B cell (primary cell): ENCODE measurements at regions of chr1 and their contacts with region 1.

Region 1: GRCh38 chr1:1307908-1308755 is at the starts of genes ACAP3 and PUSL1:
- DNase-seq: peak; percentile 95
- ATAC-seq: peak; percentile 62
- H3K4me3 ChIP-seq: peak within 1 kb of the TSS; percentile 31 to 92 (median 82)
- H3K4me3 Mint-ChIP-seq: peak within 1 kb of the TSS; percentile 90
- H3K27ac ChIP-seq: peak within 1 kb of the TSS; percentile 84 to 89
- H3K27ac Mint-ChIP-seq: peak within 1 kb of the TSS; percentile 95
- H3K4me1 ChIP-seq: peaks cover 34 to 47% of the 10 kb centered on the region in 2 donors
- H3K4me1 Mint-ChIP-seq: peaks cover 33% of the 10 kb centered on the region
- H3K27me3 ChIP-seq: no peaks in the 10 kb centered on the region
- H3K27me3 Mint-ChIP-seq: no peaks in the 10 kb centered on the region
- CTCF ChIP-seq: no peak
- total RNA-seq, gene ACAP3: 40.7 and 49.1 TPM in 2 replicates
- total RNA-seq, gene PUSL1: 15.7 and 17.9 TPM in 2 replicates

Region 2: GRCh38 chr1:923131-923990 is 384.8 kb before region 1 on chr1 and contains the start of gene SAMD11:
- CTCF ChIA-PET with region 1: no interaction called
- POLR2A ChIA-PET with region 1: no interaction called
- intact Hi-C with region 1: no loop called
- DNase-seq: peak; percentile 77
- ATAC-seq: peak; percentile 34
- H3K4me3 ChIP-seq: peak within 1 kb of the TSS in 4 of 5 experiments; percentile 4 to 58 (median 40)
- H3K4me3 Mint-ChIP-seq: peak within 1 kb of the TSS; percentile 91
- H3K27ac ChIP-seq: no peak within 1 kb of the TSS
- H3K27ac Mint-ChIP-seq: peak within 1 kb of the TSS; percentile 53
- H3K4me1 ChIP-seq: peaks cover 35 to 49% of the 10 kb centered on the region in 2 donors
- H3K4me1 Mint-ChIP-seq: peaks cover 24% of the 10 kb centered on the region
- H3K27me3 ChIP-seq: peaks cover 0 to 80% (median 41%) of the 10 kb centered on the region in 4 experiments
- H3K27me3 Mint-ChIP-seq: peaks cover 47% of the 10 kb centered on the region
- CTCF ChIP-seq: no peak
- total RNA-seq, gene SAMD11: not detected in 2 replicates

Region 3: DNA sequence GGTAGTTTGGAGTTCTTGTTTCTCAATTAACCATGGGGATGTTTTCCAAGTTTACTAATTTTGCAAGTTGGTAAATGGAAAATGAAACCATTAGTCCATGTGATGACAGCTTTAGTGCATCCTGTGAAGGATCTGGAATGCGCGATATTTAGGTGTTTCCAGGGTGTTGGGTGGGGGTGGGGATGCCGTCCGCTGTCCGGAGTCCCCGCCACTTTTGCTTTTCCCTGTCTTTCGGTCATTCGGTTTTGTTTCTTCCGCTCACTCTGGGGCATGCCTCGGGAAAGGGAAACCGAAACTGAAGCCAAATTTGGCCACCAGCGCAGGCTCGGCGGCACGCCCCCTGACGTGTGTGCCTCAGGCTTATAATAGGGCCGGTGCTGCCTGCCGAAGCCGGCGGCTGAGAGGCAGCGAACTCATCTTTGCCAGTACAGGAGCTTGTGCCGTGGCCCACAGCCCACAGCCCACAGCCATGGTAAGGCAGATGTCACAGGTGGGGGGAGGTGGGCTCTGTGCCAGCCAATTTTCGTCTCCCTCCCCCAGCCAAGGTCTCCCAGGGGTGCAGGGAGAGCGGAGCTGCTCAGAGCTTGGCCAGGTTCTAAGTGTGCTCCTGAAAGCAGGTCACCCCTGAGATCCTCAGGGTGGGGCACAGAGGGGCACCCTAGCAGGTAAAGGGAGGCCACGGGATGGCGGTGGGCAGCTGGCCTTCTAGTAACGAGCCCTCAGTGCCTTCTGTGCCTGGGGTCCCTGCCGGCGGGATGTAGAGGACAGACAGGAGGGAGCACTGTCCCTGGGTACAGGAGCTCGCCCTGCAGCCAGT is 294.8 kb before region 1 on chr1 and contains the start of gene ISG15:
- CTCF ChIA-PET with region 1: interaction called, 3 read pairs
- POLR2A ChIA-PET with region 1: no interaction called
- intact Hi-C with region 1: loop called (anchors 5 kb)
- DNase-seq: peak; percentile 91
- ATAC-seq: peak; percentile 96
- H3K4me3 ChIP-seq: peak within 1 kb of the TSS; percentile 68 to 94 (median 75)
- H3K4me3 Mint-ChIP-seq: peak within 1 kb of the TSS; percentile 95
- H3K27ac ChIP-seq: peak within 1 kb of the TSS; percentile 88 to 93
- H3K27ac Mint-ChIP-seq: peak within 1 kb of the TSS; percentile 98
- H3K4me1 ChIP-seq: peaks cover 16 to 23% of the 10 kb centered on the region in 2 donors
- H3K4me1 Mint-ChIP-seq: peaks cover 27% of the 10 kb centered on the region
- H3K27me3 ChIP-seq: no peaks in the 10 kb centered on the region
- H3K27me3 Mint-ChIP-seq: peaks cover 6% of the 10 kb centered on the region
- CTCF ChIP-seq: no peak
- total RNA-seq, gene ISG15: 25.2 and 28.3 TPM in 2 replicates

Region 4: DNA sequence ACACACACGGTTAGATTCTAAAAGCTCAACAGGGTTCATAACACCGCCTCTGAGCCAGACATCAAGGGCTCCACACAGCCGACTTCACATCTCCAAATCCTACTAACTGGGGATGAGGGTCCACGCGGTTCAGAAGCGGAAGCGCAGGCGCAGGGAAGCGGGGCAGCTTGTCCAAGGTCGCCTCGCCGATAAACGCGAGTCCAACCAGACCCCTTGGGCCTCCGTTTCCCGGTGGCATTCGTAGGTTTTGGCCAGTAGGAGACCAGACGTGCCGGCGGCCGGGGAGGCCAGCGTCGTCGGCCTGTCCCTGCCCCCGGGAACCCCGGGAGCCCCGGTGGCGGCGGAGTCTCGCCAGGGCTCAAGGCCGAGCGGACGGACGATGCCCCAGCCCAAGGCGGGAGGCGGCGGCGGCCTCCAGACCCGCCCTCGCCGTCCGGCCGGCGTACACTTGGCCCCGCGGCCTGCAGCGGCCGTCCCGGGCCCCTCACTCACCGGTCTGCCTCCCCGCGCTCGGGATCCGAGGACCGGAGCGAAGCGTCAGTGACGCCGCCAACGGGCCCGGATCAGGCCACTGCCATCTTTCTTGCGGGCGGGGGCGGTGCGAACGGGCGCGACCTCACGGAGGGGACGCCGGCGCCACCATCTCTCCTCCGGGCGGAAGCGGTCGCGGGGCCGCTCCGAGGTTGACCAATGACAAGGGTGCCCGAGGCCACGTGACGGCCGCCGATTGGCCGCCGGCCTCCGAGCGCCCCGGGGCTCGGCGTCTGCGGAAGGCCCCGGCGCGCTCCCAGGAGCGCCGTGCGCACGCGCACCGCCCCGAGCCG is 76.5 kb before region 1 on chr1 and contains the start of gene SDF4:
- CTCF ChIA-PET with region 1: no interaction called
- POLR2A ChIA-PET with region 1: no interaction called
- intact Hi-C with region 1: loop called (anchors 5 kb)
- DNase-seq: peak; percentile 98
- ATAC-seq: peak; percentile 94
- H3K4me3 ChIP-seq: peak within 1 kb of the TSS; percentile 86 to 98 (median 90)
- H3K4me3 Mint-ChIP-seq: peak within 1 kb of the TSS; percentile 93
- H3K27ac ChIP-seq: peak within 1 kb of the TSS; percentile 29 to 91
- H3K27ac Mint-ChIP-seq: peak within 1 kb of the TSS; percentile 84
- H3K4me1 ChIP-seq: peaks cover 25 to 30% of the 10 kb centered on the region in 2 donors
- H3K4me1 Mint-ChIP-seq: peaks cover 33% of the 10 kb centered on the region
- H3K27me3 ChIP-seq: no peaks in the 10 kb centered on the region
- H3K27me3 Mint-ChIP-seq: no peaks in the 10 kb centered on the region
- CTCF ChIP-seq: no peak
- total RNA-seq, gene SDF4: 143 and 151 TPM in 2 replicates

Region 5: DNA sequence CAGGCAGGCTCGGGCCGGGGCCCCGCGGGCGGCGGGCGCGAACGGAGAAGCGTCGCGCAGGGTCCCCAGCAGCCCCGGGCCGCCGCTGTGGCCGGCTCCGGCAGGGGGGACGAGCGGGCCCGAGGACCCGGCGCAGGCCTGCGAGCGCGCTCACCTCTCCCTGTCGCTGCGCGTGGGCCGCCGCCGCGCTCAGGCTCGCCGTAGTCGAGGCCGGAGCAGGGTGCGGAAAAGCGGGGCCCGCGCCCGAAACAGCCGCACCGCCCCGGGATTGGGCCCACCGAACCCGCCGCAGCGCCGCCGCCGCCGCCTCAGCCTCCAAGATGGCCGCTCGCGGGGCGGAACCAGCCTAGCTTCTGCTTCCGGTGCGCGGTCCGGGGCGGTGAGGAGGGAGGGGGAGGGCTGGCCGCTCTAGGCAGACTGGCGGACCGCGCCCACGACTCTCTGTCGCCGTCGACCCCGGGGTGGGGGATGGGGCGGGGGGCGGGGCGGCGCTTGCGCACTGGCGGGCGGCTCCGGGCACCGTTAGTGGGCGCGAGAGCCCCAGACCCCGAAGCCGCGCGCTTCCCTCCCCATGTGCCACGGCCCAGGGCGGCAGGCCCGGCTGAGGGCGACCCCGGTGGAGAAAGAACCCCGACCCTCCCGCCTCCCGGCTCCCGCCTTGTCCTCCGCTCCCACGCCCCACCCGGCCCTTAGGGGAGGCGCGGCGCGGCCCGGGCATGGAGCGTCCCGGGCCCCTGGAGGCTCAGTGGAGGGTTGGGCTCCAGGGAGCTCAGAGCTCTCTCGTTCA is 34.4 kb before region 1 on chr1 and contains the start of gene UBE2J2:
- CTCF ChIA-PET with region 1: no interaction called
- POLR2A ChIA-PET with region 1: no interaction called
- intact Hi-C with region 1: loop called (anchors 1 kb)
- DNase-seq: peak; percentile 94
- ATAC-seq: peak; percentile 98
- H3K4me3 ChIP-seq: peak within 1 kb of the TSS; percentile 3 to 84 (median 77)
- H3K4me3 Mint-ChIP-seq: peak within 1 kb of the TSS; percentile 88
- H3K27ac ChIP-seq: peak within 1 kb of the TSS; percentile 24 to 77
- H3K27ac Mint-ChIP-seq: peak within 1 kb of the TSS; percentile 76
- H3K4me1 ChIP-seq: peaks cover 29 to 38% of the 10 kb centered on the region in 2 donors
- H3K4me1 Mint-ChIP-seq: peaks cover 36% of the 10 kb centered on the region
- H3K27me3 ChIP-seq: no peaks in the 10 kb centered on the region
- H3K27me3 Mint-ChIP-seq: no peaks in the 10 kb centered on the region
- CTCF ChIP-seq: no peak
- total RNA-seq, gene UBE2J2: 115 and 120 TPM in 2 replicates

Region 6: GRCh38 chr1:1291548-1292441 is 16.3 kb before region 1 on chr1:
- CTCF ChIA-PET with region 1: interaction called, 16 read pairs
- POLR2A ChIA-PET with region 1: no interaction called
- intact Hi-C with region 1: no loop called
- DNase-seq: peak; percentile 87
- ATAC-seq: peak; percentile 84
- H3K4me3 ChIP-seq: no peak overlapping the region
- H3K4me3 Mint-ChIP-seq: no peak overlapping the region
- H3K27ac ChIP-seq: no peak overlapping the region
- H3K27ac Mint-ChIP-seq: peak overlapping the region; percentile 50
- H3K4me1 ChIP-seq: peaks cover 0 to 16% of the 10 kb centered on the region in 2 donors
- H3K4me1 Mint-ChIP-seq: peaks cover 11% of the 10 kb centered on the region
- H3K27me3 ChIP-seq: no peaks in the 10 kb centered on the region
- H3K27me3 Mint-ChIP-seq: no peaks in the 10 kb centered on the region
- CTCF ChIP-seq: peak; percentile 74

Region 7: DNA sequence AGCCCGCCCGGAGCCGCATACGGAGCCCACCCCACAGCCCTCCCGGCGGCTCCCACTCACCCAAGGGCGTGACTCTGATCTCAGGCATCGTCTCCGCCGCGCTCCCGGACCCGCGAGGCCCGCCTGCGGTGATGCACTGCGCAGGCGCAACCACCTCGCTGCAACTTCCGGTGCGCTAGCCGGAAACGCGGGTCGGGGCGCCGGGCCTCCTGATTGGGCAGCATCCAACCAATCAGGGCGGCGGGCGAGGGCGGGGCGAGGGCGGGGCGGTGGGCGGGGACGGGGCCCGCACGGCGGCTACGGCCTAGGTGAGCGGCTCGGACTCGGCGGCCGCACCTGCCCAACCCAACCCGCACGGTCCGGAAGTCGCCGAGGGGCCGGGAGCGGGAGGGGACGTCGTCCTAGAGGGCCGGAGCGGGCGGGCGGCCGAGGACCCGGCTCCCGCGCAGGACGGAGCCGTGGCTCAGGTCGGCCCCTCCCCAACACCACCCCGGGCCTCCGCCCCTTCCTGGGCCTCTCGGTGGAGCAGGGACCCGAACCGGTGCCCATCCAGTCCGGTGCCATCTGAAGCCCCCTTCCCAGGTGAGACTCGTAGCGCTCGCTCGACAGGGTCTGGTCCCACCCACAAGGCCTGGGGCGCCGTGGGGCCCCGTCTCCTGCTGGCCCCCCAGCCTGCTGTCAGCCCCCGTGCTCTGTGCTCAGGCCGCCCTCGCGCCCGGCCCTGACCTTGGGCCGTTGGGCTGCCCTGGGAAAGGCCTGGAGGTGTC is 16.6 kb after region 1 on chr1 and contains the starts of genes CPTP and INTS11:
- CTCF ChIA-PET with region 1: interaction called, 3 read pairs
- POLR2A ChIA-PET with region 1: no interaction called
- intact Hi-C with region 1: loop called (anchors 1 kb)
- DNase-seq: peak; percentile 95
- ATAC-seq: peak; percentile 89
- H3K4me3 ChIP-seq: peak within 1 kb of the TSS; percentile 31 to 84 (median 74)
- H3K4me3 Mint-ChIP-seq: peak within 1 kb of the TSS; percentile 93
- H3K27ac ChIP-seq: peak within 1 kb of the TSS; percentile 10 to 75
- H3K27ac Mint-ChIP-seq: peak within 1 kb of the TSS; percentile 92
- H3K4me1 ChIP-seq: peaks cover 20 to 32% of the 10 kb centered on the region in 2 donors
- H3K4me1 Mint-ChIP-seq: peaks cover 29% of the 10 kb centered on the region
- H3K27me3 ChIP-seq: no peaks in the 10 kb centered on the region
- H3K27me3 Mint-ChIP-seq: no peaks in the 10 kb centered on the region
- CTCF ChIP-seq: no peak
- total RNA-seq, gene CPTP: 18.8 and 21.6 TPM in 2 replicates
- total RNA-seq, gene INTS11: 149 and 167 TPM in 2 replicates